Left ventricle myocardium inferior (tissue), 1 donor: ENCODE measurements at regions of chr14 and their contacts with region 1.

Region 1: DNA sequence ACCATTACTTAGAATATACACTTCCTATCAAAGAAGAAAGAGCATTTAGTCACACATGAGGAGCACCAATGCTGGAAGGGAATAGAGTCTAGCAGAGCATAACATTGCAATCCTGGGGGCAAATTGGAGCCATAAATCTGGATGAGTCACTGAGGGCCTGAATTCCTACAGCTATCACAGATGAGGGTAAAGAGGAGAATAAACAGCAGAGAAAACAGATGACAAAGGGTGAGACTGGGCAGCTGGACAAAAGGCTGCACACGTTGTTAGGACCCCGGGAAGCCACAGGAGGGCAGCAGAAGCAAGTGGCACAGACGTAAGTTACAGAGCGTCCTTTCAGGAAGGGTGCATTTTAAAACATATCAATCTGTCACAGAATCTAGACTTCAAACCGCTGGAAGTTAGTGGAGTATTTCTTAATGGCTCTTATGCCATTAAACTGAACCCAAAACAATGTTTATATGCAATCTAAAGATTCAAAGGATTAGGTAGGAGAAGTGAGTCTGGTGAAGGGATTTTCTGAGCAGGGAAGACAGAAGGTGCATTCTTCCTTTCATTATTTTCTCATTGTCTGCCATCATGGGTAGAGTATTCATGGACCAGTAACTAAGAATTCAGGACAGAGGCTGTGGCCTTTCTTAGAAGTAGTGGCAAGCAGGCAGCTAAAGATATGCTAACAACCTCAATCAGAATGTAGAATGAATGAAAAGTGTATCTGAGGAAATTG is 159.8 kb upstream of the DAAM1 start:
- DNase-seq: peak; percentile 51
- H3K4me3 ChIP-seq: no peak overlapping the region
- H3K27ac ChIP-seq: no peak overlapping the region
- H3K4me1 ChIP-seq: no peaks in the 10 kb centered on the region
- H3K27me3 ChIP-seq: no peaks in the 10 kb centered on the region
- CTCF ChIP-seq: peak; percentile 85

Region 2: GRCh38 chr14:58637391-58638230 is 391.0 kb before region 1 on chr14 and contains the start of gene DACT1:
- intact Hi-C with region 1: loop called (anchors 10 kb)
- DNase-seq: peak; percentile 76
- H3K4me3 ChIP-seq: peak within 1 kb of the TSS; percentile 78
- H3K27ac ChIP-seq: peak within 1 kb of the TSS; percentile 90
- H3K4me1 ChIP-seq: peaks cover 49% of the 10 kb centered on the region
- H3K27me3 ChIP-seq: peaks cover 12% of the 10 kb centered on the region
- CTCF ChIP-seq: no peak
- total RNA-seq, gene DACT1: 3.4 TPM

Region 3: GRCh38 chr14:59301354-59301753 is 272.7 kb after region 1 on chr14:
- intact Hi-C with region 1: no loop called
- DNase-seq: no peak
- H3K4me3 ChIP-seq: no peak overlapping the region
- H3K27ac ChIP-seq: peak overlapping the region; percentile 23
- H3K4me1 ChIP-seq: peaks cover 93% of the 10 kb centered on the region
- H3K27me3 ChIP-seq: no peaks in the 10 kb centered on the region
- CTCF ChIP-seq: no peak